ENCODE measurements at regions of chr2 and their contacts with region 1.

Region 1: GRCh38 chr2:98454500-98455235 is 10.0 kb downstream of the INPP4A start:
- DNase-seq: peak in 5 of 35 experiments; percentile 30 to 69 (median 42)
- ATAC-seq: peak; percentile 49 to 63 (median 55)
- H3K4me3 ChIP-seq: no peak overlapping the region
- H3K4me3 Mint-ChIP-seq: peak overlapping the region; percentile 18 to 93 (median 68)
- H3K27ac ChIP-seq: peak overlapping the region; percentile 93
- H3K27ac Mint-ChIP-seq: peak overlapping the region; percentile 91
- H3K4me1 ChIP-seq: peaks cover 84 to 96% of the 10 kb centered on the region in 2 experiments
- H3K4me1 Mint-ChIP-seq: peaks cover 95 to 96% (median 96%) of the 10 kb centered on the region in 3 donors
- H3K27me3 ChIP-seq: no peaks in the 10 kb centered on the region
- H3K27me3 Mint-ChIP-seq: no peaks in the 10 kb centered on the region

Region 2: DNA sequence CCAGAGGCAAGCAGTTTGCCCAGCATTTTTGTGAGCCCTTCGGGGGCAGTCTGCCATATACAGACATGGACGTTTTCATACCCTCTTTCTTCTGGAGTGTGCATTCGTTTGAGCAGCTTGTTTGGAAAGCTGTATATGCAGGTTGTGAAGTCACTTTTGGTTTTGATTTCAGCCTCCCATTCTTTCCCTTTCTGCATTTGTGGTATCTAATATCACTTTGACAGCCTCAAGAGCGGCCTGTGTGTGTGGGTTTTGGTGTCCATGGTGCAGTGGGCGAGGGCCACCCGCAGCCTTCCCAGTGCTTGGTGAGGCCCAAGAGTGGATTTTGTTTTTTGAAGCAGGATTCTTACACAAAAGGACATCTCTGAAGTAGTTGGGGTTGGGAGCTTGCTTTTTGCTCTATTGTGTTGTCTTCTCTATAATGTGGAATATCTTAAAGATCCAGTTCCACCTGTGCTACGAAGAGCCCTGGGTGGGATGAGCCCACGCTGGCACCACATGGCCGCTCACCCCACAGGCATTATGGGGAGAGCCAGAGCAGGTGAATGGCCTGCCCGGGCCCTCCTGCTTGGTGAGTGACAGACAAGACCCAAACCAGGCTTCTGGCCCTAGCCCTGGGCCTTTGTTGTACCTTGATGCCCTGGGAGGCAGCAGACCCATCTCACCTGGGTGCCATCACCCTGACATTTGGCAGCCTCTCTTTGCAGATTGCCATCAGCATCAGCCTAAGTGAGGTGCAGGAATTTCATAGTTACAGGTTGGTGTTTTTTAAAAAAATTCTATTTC is 19.5 kb after region 1 on chr2:
- CTCF ChIA-PET with region 1: interaction called in 1 of 2 experiments, 3 read pairs
- POLR2A ChIA-PET with region 1: interaction called in 1 of 2 experiments, 11 read pairs
- DNase-seq: peak in 1 of 35 experiments; percentile 59
- ATAC-seq: peak; percentile 11 to 63 (median 45)
- H3K4me3 ChIP-seq: peak overlapping the region; percentile 23 to 32
- H3K4me3 Mint-ChIP-seq: peak overlapping the region; percentile 65 to 71 (median 67)
- H3K27ac ChIP-seq: peak overlapping the region; percentile 77
- H3K27ac Mint-ChIP-seq: peak overlapping the region; percentile 89 to 91
- H3K4me1 ChIP-seq: peaks cover 78 to 97% of the 10 kb centered on the region in 2 experiments
- H3K4me1 Mint-ChIP-seq: peaks cover 97 to 99% (median 97%) of the 10 kb centered on the region in 3 donors
- H3K27me3 ChIP-seq: no peaks in the 10 kb centered on the region
- H3K27me3 Mint-ChIP-seq: no peaks in the 10 kb centered on the region

Region 3: GRCh38 chr2:98498703-98499440 is 44.2 kb after region 1 on chr2:
- CTCF ChIA-PET with region 1: no interaction called
- POLR2A ChIA-PET with region 1: no interaction called
- DNase-seq: no peak
- ATAC-seq: no peak
- H3K4me3 ChIP-seq: no peak overlapping the region
- H3K4me3 Mint-ChIP-seq: no peak overlapping the region
- H3K27ac ChIP-seq: no peak overlapping the region
- H3K27ac Mint-ChIP-seq: peak overlapping the region in 1 of 2 donors; percentile 62
- H3K4me1 ChIP-seq: peaks cover 10 to 38% of the 10 kb centered on the region in 2 experiments
- H3K4me1 Mint-ChIP-seq: peaks cover 74 to 84% (median 84%) of the 10 kb centered on the region in 3 donors
- H3K27me3 ChIP-seq: no peaks in the 10 kb centered on the region
- H3K27me3 Mint-ChIP-seq: no peaks in the 10 kb centered on the region

Region 4: GRCh38 chr2:98608116-98608999 is 153.7 kb after region 1 on chr2 and contains the starts of genes COA5 and UNC50:
- CTCF ChIA-PET with region 1: no interaction called
- POLR2A ChIA-PET with region 1: no interaction called
- DNase-seq: peak; percentile 72 to 94 (median 86)
- ATAC-seq: peak; percentile 86 to 92 (median 88)
- H3K4me3 ChIP-seq: peak within 1 kb of the TSS; percentile 92 to 95
- H3K4me3 Mint-ChIP-seq: peak within 1 kb of the TSS; percentile 85 to 95 (median 90)
- H3K27ac ChIP-seq: peak within 1 kb of the TSS; percentile 93
- H3K27ac Mint-ChIP-seq: peak within 1 kb of the TSS; percentile 87 to 94
- H3K4me1 ChIP-seq: peaks cover 22 to 34% of the 10 kb centered on the region in 2 experiments
- H3K4me1 Mint-ChIP-seq: peaks cover 65 to 75% (median 70%) of the 10 kb centered on the region in 3 donors
- H3K27me3 ChIP-seq: no peaks in the 10 kb centered on the region
- H3K27me3 Mint-ChIP-seq: no peaks in the 10 kb centered on the region
- total RNA-seq, gene COA5: 24.6 to 45.8 (median 39.9) TPM
- total RNA-seq, gene UNC50: 19.5 to 37.9 (median 29.5) TPM

Measured in T-cell (primary cell).